ENCODE measurements at regions of chr6 and their contacts with region 1.

Region 1: GRCh38 chr6:126461055-126461454 is 121.1 kb downstream of the CENPW start:
- DNase-seq: no peak
- ATAC-seq: no peak
- H3K4me3 Mint-ChIP-seq: no peak overlapping the region
- H3K27ac Mint-ChIP-seq: no peak overlapping the region
- H3K4me1 Mint-ChIP-seq: no peaks in the 10 kb centered on the region
- H3K27me3 Mint-ChIP-seq: no peaks in the 10 kb centered on the region
- CTCF ChIP-seq: no peak

Region 2: GRCh38 chr6:124573953-124574352 is 1887.1 kb before region 1 on chr6:
- CTCF ChIA-PET with region 1: no interaction called
- POLR2A ChIA-PET with region 1: no interaction called
- intact Hi-C with region 1: no loop called
- DNase-seq: no peak
- ATAC-seq: no peak
- H3K4me3 Mint-ChIP-seq: no peak overlapping the region
- H3K27ac Mint-ChIP-seq: no peak overlapping the region
- H3K4me1 Mint-ChIP-seq: no peaks in the 10 kb centered on the region
- H3K27me3 Mint-ChIP-seq: no peaks in the 10 kb centered on the region
- CTCF ChIP-seq: no peak

Region 3: DNA sequence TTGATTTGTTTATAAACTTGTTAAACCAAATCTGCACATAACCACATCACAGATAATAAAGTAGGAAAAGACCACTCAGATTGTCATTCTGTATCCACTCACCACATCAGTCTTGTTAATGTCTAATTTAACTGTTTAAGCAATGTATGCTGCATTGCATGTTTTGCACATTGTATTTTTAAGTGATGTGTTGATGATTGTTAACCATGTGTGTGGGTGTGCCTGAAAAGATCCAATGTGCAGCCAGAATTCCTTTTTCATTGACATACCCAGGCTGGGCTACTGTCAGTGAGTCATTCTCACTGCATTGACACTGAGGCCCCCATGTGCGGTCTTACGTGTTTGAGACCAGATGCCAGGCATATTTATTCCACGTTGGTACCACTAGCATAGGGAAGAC is 307.4 kb before region 1 on chr6:
- CTCF ChIA-PET with region 1: no interaction called
- POLR2A ChIA-PET with region 1: no interaction called
- intact Hi-C with region 1: no loop called
- DNase-seq: no peak
- ATAC-seq: no peak
- H3K4me3 Mint-ChIP-seq: no peak overlapping the region
- H3K27ac Mint-ChIP-seq: no peak overlapping the region
- H3K4me1 Mint-ChIP-seq: peaks cover 4% of the 10 kb centered on the region
- H3K27me3 Mint-ChIP-seq: no peaks in the 10 kb centered on the region
- CTCF ChIP-seq: no peak

Region 4: GRCh38 chr6:128421788-128422187 is 1960.7 kb after region 1 on chr6:
- CTCF ChIA-PET with region 1: no interaction called
- POLR2A ChIA-PET with region 1: no interaction called
- intact Hi-C with region 1: loop called (anchors 10 kb)
- DNase-seq: no peak
- ATAC-seq: no peak
- H3K4me3 Mint-ChIP-seq: no peak overlapping the region
- H3K27ac Mint-ChIP-seq: no peak overlapping the region
- H3K4me1 Mint-ChIP-seq: no peaks in the 10 kb centered on the region
- H3K27me3 Mint-ChIP-seq: no peaks in the 10 kb centered on the region
- CTCF ChIP-seq: no peak